CD14-positive monocyte (primary cell): ENCODE measurements at regions of chr7 and their contacts with region 1.

Region 1: GRCh38 chr7:128904381-128905197 is 5.9 kb downstream of the KCP start:
- DNase-seq: peak; percentile 56 to 74 (median 68)
- H3K4me3 ChIP-seq: no peak overlapping the region
- H3K4me3 Mint-ChIP-seq: no peak overlapping the region
- H3K27ac ChIP-seq: no peak overlapping the region
- H3K27ac Mint-ChIP-seq: no peak overlapping the region
- H3K4me1 ChIP-seq: peaks cover under 1 to 9% of the 10 kb centered on the region in 2 donors
- H3K4me1 Mint-ChIP-seq: peaks cover 12% of the 10 kb centered on the region
- H3K27me3 ChIP-seq: peaks cover 0 to 14% of the 10 kb centered on the region in 2 donors
- H3K27me3 Mint-ChIP-seq: peaks cover 16 to 19% (median 17%) of the 10 kb centered on the region in 3 donors
- CTCF ChIP-seq: peak; percentile 85

Region 2: GRCh38 chr7:128221929-128222403 is 682.6 kb before region 1 on chr7:
- intact Hi-C with region 1: no loop called
- DNase-seq: peak; percentile 65 to 77 (median 70)
- H3K4me3 ChIP-seq: peak overlapping the region in 1 of 3 experiments; percentile 0
- H3K4me3 Mint-ChIP-seq: peak overlapping the region in 1 of 2 donors; percentile 11
- H3K27ac ChIP-seq: peak overlapping the region; percentile 55 to 80
- H3K27ac Mint-ChIP-seq: peak overlapping the region; percentile 80 to 93 (median 86)
- H3K4me1 ChIP-seq: peaks cover 61 to 65% of the 10 kb centered on the region in 2 donors
- H3K4me1 Mint-ChIP-seq: peaks cover 65% of the 10 kb centered on the region
- H3K27me3 ChIP-seq: no peaks in the 10 kb centered on the region
- H3K27me3 Mint-ChIP-seq: peaks cover 0 to 4% (median 2%) of the 10 kb centered on the region in 3 donors
- CTCF ChIP-seq: no peak

Region 3: DNA sequence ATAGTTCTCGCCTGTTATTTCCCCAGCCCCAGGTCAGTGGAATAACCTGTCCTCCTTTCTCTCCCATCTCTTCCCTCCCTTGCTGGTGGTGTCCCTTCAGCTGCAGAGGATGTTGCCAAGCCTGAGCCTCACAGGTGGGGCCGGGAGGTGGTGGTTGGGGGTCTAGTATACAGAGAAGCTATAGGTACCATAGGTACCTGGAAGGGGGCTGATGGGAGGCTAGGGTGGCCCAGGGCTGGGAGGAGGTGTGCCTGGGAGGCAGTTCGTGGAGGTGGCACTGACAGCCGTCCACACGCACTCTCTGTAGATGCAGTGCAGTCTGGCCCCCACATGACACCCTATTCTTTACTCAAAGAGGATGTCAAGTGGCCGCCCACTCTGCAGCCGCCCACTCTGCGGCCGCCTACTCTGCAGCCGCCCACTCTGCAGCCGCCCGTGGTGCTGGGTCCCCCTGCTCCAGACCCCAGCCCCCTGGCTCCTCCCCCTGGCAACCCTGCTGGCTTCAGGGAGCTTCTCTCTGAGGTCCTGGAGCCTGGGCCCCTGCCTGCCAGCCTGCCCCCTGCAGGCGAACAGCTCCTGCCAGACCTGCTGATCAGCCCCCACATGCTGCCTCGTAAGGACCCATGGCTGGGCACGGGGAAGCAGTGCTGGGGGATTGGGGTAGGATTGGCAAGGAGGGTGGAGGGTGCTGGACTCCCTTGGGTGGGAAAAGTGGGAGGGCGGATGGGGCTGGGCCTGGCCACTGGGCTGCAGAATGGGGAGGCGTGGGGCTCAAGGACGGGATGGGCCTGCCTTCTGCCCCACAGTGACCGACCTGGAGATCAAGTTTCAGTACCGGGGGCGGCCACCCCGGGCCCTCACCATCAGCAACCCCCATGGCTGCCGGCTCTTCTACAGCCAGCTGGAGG is 42.6 kb after region 1 on chr7:
- intact Hi-C with region 1: loop called (anchors 2 to 5 kb)
- DNase-seq: peak in 1 of 3 donors; percentile 33
- H3K4me3 ChIP-seq: no peak overlapping the region
- H3K4me3 Mint-ChIP-seq: no peak overlapping the region
- H3K27ac ChIP-seq: peak overlapping the region; percentile 44 to 56
- H3K27ac Mint-ChIP-seq: peak overlapping the region in 6 of 7 donors; percentile 10 to 70 (median 59)
- H3K4me1 ChIP-seq: peaks cover 67 to 74% of the 10 kb centered on the region in 2 donors
- H3K4me1 Mint-ChIP-seq: peaks cover 73% of the 10 kb centered on the region
- H3K27me3 ChIP-seq: no peaks in the 10 kb centered on the region
- H3K27me3 Mint-ChIP-seq: no peaks in the 10 kb centered on the region
- CTCF ChIP-seq: peak; percentile 49

Region 4: GRCh38 chr7:129009437-129009836 is 104.8 kb after region 1 on chr7:
- intact Hi-C with region 1: no loop called
- DNase-seq: no peak
- H3K4me3 ChIP-seq: no peak overlapping the region
- H3K4me3 Mint-ChIP-seq: no peak overlapping the region
- H3K27ac ChIP-seq: peak overlapping the region in 1 of 2 donors; percentile 53
- H3K27ac Mint-ChIP-seq: peak overlapping the region in 2 of 7 donors; percentile 32 to 77
- H3K4me1 ChIP-seq: peaks cover 15 to 25% of the 10 kb centered on the region in 2 donors
- H3K4me1 Mint-ChIP-seq: peaks cover 44% of the 10 kb centered on the region
- H3K27me3 ChIP-seq: no peaks in the 10 kb centered on the region
- H3K27me3 Mint-ChIP-seq: peaks cover 0 to 1% (median 0%) of the 10 kb centered on the region in 3 donors
- CTCF ChIP-seq: no peak

Region 5: DNA sequence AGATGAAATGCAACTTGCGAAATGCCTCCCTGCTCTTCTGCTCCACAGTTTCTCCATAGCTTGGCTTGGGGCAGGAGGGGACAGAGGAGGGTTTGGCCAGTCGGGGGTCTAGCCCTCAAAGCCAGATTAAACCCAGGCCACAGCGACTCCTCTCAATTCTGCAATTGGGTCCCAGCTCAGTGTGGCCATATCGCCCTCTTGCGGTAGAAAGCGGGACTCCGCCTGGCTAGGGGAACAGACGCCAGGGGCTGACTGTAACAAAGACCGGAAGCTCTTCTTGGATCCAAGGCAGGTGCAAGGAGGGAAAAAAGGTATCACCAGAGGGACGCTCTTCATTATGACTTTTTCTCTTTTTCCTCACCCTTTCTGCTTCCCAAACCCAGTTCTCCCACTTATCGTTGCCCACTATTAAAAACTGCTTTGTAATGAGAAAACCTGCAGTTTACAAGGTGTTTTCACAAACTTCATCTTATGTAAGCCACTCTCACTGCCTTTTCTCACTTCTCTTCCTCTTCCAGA is 187.0 kb after region 1 on chr7:
- intact Hi-C with region 1: loop called (anchors 5 to 10 kb)
- DNase-seq: peak; percentile 68 to 75 (median 75)
- H3K4me3 ChIP-seq: peak overlapping the region in 1 of 3 experiments; percentile 49
- H3K4me3 Mint-ChIP-seq: peak overlapping the region; percentile 56 to 76
- H3K27ac ChIP-seq: no peak overlapping the region
- H3K27ac Mint-ChIP-seq: peak overlapping the region in 6 of 7 donors; percentile 32 to 90 (median 68)
- H3K4me1 ChIP-seq: peaks cover 18 to 26% of the 10 kb centered on the region in 2 donors
- H3K4me1 Mint-ChIP-seq: peaks cover 35% of the 10 kb centered on the region
- H3K27me3 ChIP-seq: no peaks in the 10 kb centered on the region
- H3K27me3 Mint-ChIP-seq: peaks cover 0 to 1% (median 0%) of the 10 kb centered on the region in 3 donors
- CTCF ChIP-seq: peak; percentile 92

Region 6: DNA sequence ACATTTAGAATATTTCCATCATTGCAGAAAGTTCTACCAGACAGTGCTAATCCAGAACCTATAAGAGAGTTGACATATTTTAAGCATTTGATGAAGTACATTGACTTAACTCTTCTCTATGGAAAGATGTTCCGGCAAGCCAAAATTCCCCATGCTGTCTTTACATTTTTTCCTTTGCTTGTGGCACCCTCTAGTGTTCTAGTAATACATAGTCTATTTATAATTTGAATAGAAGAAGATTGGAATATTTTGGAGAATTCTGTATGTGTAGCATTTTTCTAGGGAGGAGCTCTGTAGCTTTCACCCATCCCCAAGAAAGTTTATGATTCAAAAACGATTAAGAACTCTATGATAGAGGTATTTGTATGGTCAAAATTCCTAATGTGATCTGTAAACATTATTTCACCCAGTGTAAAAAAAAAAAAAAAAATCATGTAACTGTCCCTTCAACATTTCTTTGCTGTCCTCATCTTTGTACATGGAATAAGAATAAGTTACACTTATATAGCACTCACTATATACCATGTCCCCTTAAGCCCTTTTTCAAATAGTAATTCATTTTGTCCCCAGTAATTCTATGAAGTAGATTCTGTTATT is 740.1 kb after region 1 on chr7:
- intact Hi-C with region 1: no loop called
- DNase-seq: peak; percentile 14 to 38 (median 31)
- H3K4me3 ChIP-seq: no peak overlapping the region
- H3K4me3 Mint-ChIP-seq: no peak overlapping the region
- H3K27ac ChIP-seq: no peak overlapping the region
- H3K27ac Mint-ChIP-seq: peak overlapping the region in 1 of 7 donors; percentile 23
- H3K4me1 ChIP-seq: no peaks in the 10 kb centered on the region
- H3K4me1 Mint-ChIP-seq: no peaks in the 10 kb centered on the region
- H3K27me3 ChIP-seq: no peaks in the 10 kb centered on the region
- H3K27me3 Mint-ChIP-seq: no peaks in the 10 kb centered on the region
- CTCF ChIP-seq: peak; percentile 56